Mammary epithelial cell (primary cell): ENCODE measurements at regions of chr5 and their contacts with region 1.

Region 1: GRCh38 chr5:97149709-97150108 is 7.3 kb upstream of the LIX1 start:
- DNase-seq: no peak
- H3K4me3 ChIP-seq: no peak overlapping the region
- H3K27ac ChIP-seq: no peak overlapping the region
- H3K4me1 ChIP-seq: no peaks in the 10 kb centered on the region
- H3K27me3 ChIP-seq: peaks cover 1% of the 10 kb centered on the region
- CTCF ChIP-seq: no peak

Region 2: DNA sequence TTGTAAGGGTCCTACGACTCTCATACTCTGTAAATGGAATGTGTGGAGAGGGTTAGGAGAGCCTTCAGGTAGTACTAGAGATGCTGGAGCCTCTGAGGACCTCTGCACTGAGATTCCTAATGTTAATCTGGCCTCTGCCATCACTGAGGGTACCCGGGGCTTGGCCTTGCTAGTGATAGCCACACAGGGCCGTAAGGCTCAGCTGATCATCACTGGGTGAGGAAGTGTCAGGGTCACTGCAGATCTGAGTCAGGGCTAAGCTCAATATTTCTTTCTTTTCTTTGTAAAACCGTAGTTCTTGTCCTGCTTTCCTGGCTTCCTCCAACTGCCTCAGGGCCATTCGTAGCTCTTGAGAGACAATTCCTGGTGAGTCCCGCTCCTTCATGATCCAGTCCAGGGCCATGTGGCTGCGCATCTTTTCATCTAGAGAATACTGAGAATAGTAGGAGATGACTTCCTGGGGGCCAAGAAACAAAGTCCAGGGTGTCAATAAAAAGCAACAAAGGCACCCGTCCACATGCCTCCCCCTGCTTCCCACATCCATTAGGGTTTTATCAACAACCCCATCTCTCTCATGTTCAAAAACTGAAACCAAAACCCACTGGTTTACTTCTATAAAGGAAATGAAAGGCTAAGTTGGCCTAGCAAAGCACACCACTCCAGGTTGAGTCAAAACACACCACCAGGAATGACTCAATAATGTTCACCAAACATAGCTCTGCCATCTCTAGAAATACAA is 55.0 kb before region 1 on chr5:
- CTCF ChIA-PET with region 1: no interaction called
- dilution Hi-C with region 1: loop called (anchors 10 kb)
- in situ Hi-C with region 1: no loop called
- intact Hi-C with region 1: no loop called
- DNase-seq: no peak
- H3K4me3 ChIP-seq: no peak overlapping the region
- H3K27ac ChIP-seq: no peak overlapping the region
- H3K4me1 ChIP-seq: no peaks in the 10 kb centered on the region
- H3K27me3 ChIP-seq: peaks cover 8% of the 10 kb centered on the region
- CTCF ChIP-seq: no peak

Region 3: GRCh38 chr5:97118261-97119006 is 31.3 kb before region 1 on chr5:
- CTCF ChIA-PET with region 1: no interaction called
- dilution Hi-C with region 1: no loop called
- in situ Hi-C with region 1: no loop called
- intact Hi-C with region 1: no loop called
- DNase-seq: no peak
- H3K4me3 ChIP-seq: no peak overlapping the region
- H3K27ac ChIP-seq: no peak overlapping the region
- H3K4me1 ChIP-seq: no peaks in the 10 kb centered on the region
- H3K27me3 ChIP-seq: no peaks in the 10 kb centered on the region
- CTCF ChIP-seq: no peak

Region 4: DNA sequence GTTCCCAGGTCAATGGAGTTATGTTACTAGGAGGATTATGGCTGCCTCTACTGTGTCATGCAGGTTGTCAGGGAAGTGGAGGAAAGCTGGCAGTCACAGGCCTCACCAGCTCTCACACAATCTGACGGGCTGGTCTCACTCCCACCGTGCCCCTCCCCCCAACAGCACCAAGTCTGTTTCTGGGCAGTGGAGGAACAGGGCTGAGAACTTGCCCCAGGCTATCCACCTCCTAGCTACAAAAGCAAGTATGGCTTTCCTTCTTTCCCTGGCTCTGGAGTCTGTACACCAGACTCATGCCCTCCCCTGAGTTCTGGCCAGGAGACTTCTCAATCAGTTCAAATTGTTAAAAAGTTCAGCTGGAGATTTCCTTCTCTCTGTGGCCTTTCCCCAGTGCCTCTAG is 59.0 kb after region 1 on chr5:
- CTCF ChIA-PET with region 1: no interaction called
- dilution Hi-C with region 1: no loop called
- in situ Hi-C with region 1: no loop called
- intact Hi-C with region 1: no loop called
- DNase-seq: no peak
- H3K4me3 ChIP-seq: no peak overlapping the region
- H3K27ac ChIP-seq: no peak overlapping the region
- H3K4me1 ChIP-seq: no peaks in the 10 kb centered on the region
- H3K27me3 ChIP-seq: no peaks in the 10 kb centered on the region
- CTCF ChIP-seq: no peak